Mammary epithelial cell (primary cell): ENCODE measurements at regions of chr2 and their contacts with region 1.

Region 1: DNA sequence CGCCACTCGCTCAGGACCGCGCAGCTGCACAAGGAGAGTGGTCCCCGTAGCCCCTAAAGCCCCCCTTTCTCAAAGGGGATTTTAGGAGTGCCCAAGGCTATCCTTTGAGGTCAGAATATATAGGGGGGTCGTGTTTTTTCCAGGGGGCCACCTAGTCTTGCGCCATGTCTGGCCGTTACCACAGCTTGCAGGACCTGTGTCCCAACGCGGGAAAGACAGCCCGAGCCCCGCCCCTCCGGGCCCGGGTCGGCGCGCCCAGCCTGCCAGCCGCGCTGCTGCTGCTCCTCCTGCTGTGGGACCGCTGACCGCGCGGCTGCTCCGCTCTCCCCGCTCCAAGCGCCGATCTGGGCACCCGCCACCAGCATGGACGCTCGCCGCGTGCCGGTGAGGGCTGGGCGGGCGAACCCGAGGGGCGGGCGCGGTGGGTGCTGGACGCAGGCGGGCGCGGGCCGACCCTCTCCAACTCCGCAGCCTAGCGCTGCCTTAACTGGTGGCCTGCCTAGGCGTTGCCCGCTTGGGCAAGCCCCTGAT is at the start of gene CDCA7:
- DNase-seq: peak; percentile 62
- H3K4me3 ChIP-seq: peak within 1 kb of the TSS; percentile 65 to 86 (median 84)
- H3K27ac ChIP-seq: peak within 1 kb of the TSS; percentile 81
- H3K4me1 ChIP-seq: peaks cover 17% of the 10 kb centered on the region
- H3K27me3 ChIP-seq: no peaks in the 10 kb centered on the region
- CTCF ChIP-seq: peak in 1 of 2 donors; percentile 22
- total RNA-seq, gene CDCA7: 2.5 to 20.0 TPM

Region 2: DNA sequence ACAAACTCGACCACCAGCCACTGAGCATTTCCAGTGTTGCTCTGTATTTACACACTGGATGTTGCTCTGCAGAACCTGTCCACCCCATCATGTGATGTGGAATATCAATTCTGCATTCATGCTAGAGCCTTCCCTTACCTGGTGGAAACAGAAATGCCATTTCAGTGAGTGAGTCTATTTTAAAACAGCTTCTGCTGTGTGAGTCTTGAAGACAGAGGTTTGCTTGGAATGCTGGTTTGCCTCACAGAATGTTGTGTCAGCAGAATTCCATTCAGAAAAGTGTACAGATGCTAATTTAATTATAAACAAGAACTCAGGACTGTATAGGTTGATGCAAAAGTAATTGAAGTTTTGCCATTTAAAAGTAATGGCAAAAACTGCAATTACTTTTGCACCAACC is 160.7 kb before region 1 on chr2:
- CTCF ChIA-PET with region 1: no interaction called
- dilution Hi-C with region 1: no loop called
- in situ Hi-C with region 1: no loop called
- intact Hi-C with region 1: no loop called
- DNase-seq: peak; percentile 70
- H3K4me3 ChIP-seq: no peak overlapping the region
- H3K27ac ChIP-seq: peak overlapping the region; percentile 3
- H3K4me1 ChIP-seq: peaks cover 23% of the 10 kb centered on the region
- H3K27me3 ChIP-seq: no peaks in the 10 kb centered on the region
- CTCF ChIP-seq: no peak

Region 3: GRCh38 chr2:173218326-173219056 is 136.2 kb before region 1 on chr2:
- CTCF ChIA-PET with region 1: no interaction called
- dilution Hi-C with region 1: no loop called
- in situ Hi-C with region 1: no loop called
- intact Hi-C with region 1: loop called (anchors 5 kb)
- DNase-seq: peak; percentile 40
- H3K4me3 ChIP-seq: no peak overlapping the region
- H3K27ac ChIP-seq: peak overlapping the region; percentile 21
- H3K4me1 ChIP-seq: peaks cover 18% of the 10 kb centered on the region
- H3K27me3 ChIP-seq: no peaks in the 10 kb centered on the region
- CTCF ChIP-seq: no peak

Region 4: GRCh38 chr2:173249661-173250641 is 104.7 kb before region 1 on chr2:
- CTCF ChIA-PET with region 1: no interaction called
- dilution Hi-C with region 1: no loop called
- in situ Hi-C with region 1: no loop called
- intact Hi-C with region 1: loop called (anchors 10 kb)
- DNase-seq: no peak
- H3K4me3 ChIP-seq: no peak overlapping the region
- H3K27ac ChIP-seq: no peak overlapping the region
- H3K4me1 ChIP-seq: peaks cover 7% of the 10 kb centered on the region
- H3K27me3 ChIP-seq: no peaks in the 10 kb centered on the region
- CTCF ChIP-seq: no peak

Region 5: DNA sequence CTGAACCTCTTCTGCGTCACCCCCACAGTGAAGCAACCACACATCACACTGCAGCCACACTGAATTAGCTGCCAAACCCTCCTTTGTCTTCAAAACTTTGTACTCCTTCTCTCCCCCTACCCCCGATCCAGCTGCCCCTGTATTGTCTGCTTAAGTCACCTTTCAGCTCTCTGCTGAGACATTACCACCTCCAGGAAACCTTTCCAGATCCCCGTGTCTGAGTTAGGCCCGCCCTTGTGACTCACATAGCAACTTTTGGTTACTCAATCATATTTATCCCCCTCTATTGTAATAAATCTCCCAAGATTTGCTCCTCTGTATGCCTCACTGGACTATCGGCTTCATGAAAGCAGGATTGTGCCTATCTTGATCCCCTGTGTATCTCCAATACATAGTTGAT is 82.8 kb before region 1 on chr2:
- CTCF ChIA-PET with region 1: no interaction called
- dilution Hi-C with region 1: no loop called
- in situ Hi-C with region 1: no loop called
- intact Hi-C with region 1: loop called (anchors 5 kb)
- DNase-seq: peak; percentile 74
- H3K4me3 ChIP-seq: no peak overlapping the region
- H3K27ac ChIP-seq: no peak overlapping the region
- H3K4me1 ChIP-seq: peaks cover 7% of the 10 kb centered on the region
- H3K27me3 ChIP-seq: no peaks in the 10 kb centered on the region
- CTCF ChIP-seq: no peak

Region 6: DNA sequence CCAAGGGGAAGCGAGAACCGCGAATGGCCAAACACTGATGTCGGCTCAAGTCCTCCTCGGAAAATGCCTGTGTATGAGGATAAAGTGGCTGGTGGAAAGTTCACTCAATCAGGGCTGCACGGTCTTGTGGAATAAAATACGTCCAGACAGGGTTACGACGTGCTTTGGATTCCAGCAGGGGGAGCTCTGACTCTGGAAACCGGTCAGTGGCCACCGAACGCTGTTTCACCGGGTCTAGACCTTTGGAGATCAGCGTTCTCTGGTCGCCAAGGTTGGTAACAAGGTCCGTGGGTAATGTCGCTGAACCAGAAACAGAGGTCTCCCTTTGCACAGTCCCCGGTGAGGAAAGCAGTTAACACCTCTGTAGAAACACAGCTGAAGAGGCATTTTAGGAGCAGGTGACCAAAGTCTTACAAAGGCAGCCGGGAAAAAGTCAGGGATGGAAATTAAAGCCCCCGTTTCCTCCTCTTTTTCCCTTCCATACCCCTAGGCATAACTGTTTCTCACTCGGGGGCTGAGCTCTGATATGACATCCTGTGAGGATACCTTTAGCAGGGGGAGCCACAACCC is 47.8 kb after region 1 on chr2:
- CTCF ChIA-PET with region 1: no interaction called
- dilution Hi-C with region 1: no loop called
- in situ Hi-C with region 1: no loop called
- intact Hi-C with region 1: no loop called
- DNase-seq: peak; percentile 65
- H3K4me3 ChIP-seq: peak overlapping the region; percentile 23 to 33 (median 26)
- H3K27ac ChIP-seq: no peak overlapping the region
- H3K4me1 ChIP-seq: peaks cover 17% of the 10 kb centered on the region
- H3K27me3 ChIP-seq: no peaks in the 10 kb centered on the region
- CTCF ChIP-seq: peak; percentile 78 to 92